A549 (cell line): ENCODE measurements at regions of chr5 and their contacts with region 1.

Region 1: GRCh38 chr5:153974131-153974812 is 64.4 kb downstream of the FAM114A2 start:
- DNase-seq: peak; percentile 35 to 56
- ATAC-seq: peak; percentile 65 to 87; a peak in 5 of 6 replicates
- H3K4me3 ChIP-seq: no peak overlapping the region
- H3K27ac ChIP-seq: no peak overlapping the region
- H3K4me1 ChIP-seq: no peaks in the 10 kb centered on the region
- CTCF ChIP-seq: peak; percentile 92
- EP300 ChIP-seq: no peak
- POLR2A ChIP-seq: no peak
- RAD21 ChIP-seq: peak; percentile 90 to 91

Region 2: GRCh38 chr5:153883854-153884611 is 90.2 kb before region 1 on chr5:
- CTCF ChIA-PET with region 1: no interaction called
- POLR2A ChIA-PET with region 1: no interaction called
- DNase-seq: no peak
- ATAC-seq: no peak
- H3K4me3 ChIP-seq: no peak overlapping the region
- H3K27ac ChIP-seq: no peak overlapping the region
- H3K4me1 ChIP-seq: no peaks in the 10 kb centered on the region
- CTCF ChIP-seq: no peak
- EP300 ChIP-seq: no peak
- POLR2A ChIP-seq: no peak
- RAD21 ChIP-seq: no peak

Region 3: DNA sequence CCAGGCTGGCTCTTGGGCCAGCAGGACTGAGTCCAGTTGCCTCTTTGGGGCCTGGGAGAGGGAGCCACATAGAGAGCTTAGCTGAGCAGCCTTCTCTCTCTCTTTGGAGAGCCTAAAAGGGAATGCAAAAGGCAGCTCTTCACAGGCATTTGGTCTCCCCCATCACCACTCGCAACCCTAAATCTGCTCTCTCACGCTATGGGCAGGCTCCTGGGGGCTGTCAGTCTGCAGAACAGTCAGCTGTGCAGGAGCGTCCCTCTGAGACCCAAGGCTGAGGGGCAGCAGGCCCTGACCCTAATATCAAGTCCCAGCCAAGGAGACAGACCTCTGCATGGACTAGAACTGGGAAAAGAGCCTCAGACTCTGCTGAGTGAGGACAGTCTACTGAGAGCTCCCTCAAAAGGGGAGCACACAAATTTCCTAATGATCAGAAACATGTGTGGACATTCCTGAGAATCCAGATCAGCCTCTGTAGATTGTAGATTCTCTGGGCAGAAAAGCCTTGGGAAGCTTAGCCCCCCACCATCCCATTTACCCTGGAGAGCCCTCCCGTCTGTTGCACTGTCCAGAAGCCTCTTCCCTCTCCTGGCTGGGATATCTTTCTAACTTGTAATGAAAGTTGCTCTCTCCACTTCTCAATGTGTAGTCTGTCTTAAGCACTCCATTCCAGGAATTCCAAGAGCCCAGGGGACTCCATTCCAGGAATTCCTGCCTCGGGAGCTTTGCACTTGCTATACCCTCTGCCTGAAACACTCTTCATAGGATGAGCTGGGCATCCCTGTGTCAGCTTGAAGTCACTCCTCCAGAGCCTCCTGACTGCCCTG is 14.9 kb before region 1 on chr5:
- CTCF ChIA-PET with region 1: interaction called, 60 read pairs
- POLR2A ChIA-PET with region 1: no interaction called
- DNase-seq: peak in 1 of 2 experiments; percentile 22
- ATAC-seq: peak; percentile 53 to 75
- H3K4me3 ChIP-seq: no peak overlapping the region
- H3K27ac ChIP-seq: no peak overlapping the region
- H3K4me1 ChIP-seq: no peaks in the 10 kb centered on the region
- CTCF ChIP-seq: no peak
- EP300 ChIP-seq: no peak
- POLR2A ChIP-seq: no peak
- RAD21 ChIP-seq: no peak

Region 4: DNA sequence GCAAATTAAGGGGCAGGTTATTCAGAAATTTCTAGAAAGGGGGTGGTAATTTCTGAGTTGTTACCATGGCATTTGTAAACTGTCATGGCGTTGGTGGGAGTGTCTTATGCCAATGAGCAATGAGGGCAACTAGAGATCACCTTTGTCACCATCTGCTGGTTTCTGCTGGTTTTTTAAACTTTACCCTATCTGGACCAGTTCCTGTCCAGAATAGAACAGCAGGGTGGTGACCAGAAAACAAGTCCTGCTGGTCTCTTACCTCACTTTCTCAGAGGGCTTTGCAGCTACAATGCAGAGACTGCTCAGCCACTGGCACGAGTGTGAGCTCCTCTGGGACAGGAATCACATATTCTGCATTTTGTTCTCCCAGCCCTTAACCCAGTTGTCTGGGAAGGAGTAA is 13.0 kb after region 1 on chr5:
- CTCF ChIA-PET with region 1: interaction called, 38 read pairs
- POLR2A ChIA-PET with region 1: no interaction called
- DNase-seq: no peak
- ATAC-seq: no peak
- H3K4me3 ChIP-seq: no peak overlapping the region
- H3K27ac ChIP-seq: no peak overlapping the region
- H3K4me1 ChIP-seq: no peaks in the 10 kb centered on the region
- CTCF ChIP-seq: no peak
- EP300 ChIP-seq: no peak
- POLR2A ChIP-seq: no peak
- RAD21 ChIP-seq: no peak

Region 5: GRCh38 chr5:154179846-154180710 is 205.8 kb after region 1 on chr5:
- CTCF ChIA-PET with region 1: interaction called, 23 read pairs
- POLR2A ChIA-PET with region 1: no interaction called
- DNase-seq: peak; percentile 69 to 80
- ATAC-seq: peak; percentile 96 to 98
- H3K4me3 ChIP-seq: no peak overlapping the region
- H3K27ac ChIP-seq: no peak overlapping the region
- H3K4me1 ChIP-seq: no peaks in the 10 kb centered on the region
- CTCF ChIP-seq: peak; percentile 76
- EP300 ChIP-seq: no peak
- POLR2A ChIP-seq: no peak
- RAD21 ChIP-seq: peak; percentile 77 to 82

Region 6: DNA sequence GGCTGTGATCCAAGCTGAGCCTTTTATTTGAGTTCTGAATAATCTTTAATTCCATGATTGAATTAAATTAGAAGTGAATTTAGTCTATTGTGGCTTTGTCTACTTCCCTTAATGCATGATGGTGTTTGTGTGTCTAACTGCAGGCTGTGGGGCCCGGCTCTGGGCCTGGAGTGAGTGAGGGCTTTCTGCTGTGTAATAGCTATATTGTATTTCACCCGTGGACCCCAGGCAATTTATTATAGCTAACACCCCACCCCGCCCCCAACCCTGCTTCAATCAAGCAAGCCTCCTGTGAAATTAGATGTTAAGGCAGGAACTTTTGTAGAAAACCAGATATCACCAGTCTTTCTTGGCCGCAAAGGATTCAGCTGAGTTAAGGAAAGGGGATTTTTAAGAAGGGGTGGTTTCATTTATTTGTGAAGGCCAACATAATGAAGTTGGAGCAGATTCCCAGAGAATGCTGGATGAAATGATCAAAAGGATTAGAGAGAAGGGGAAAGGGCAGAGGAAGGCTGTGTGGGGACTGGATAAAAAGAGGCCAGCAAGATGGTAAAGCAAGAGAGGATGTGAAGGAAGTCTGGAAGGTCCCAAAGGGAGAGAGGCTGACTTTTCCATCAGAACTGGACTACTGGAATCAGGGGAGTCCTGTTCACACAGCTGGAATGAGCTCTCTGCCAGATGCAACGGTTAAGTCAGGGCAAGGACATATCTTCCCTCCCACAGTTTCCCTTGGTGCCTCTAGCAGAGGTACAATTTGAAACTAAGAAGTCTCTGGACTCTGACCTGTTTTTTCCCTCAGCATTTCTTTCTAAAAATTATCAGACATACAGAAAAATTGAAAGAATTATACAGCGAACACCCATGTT is 346.2 kb after region 1 on chr5:
- CTCF ChIA-PET with region 1: no interaction called
- POLR2A ChIA-PET with region 1: no interaction called
- DNase-seq: no peak
- ATAC-seq: no peak
- H3K4me3 ChIP-seq: no peak overlapping the region
- H3K27ac ChIP-seq: peak overlapping the region in 1 of 2 experiments; percentile 41; a peak in 3 of 6 replicates
- H3K4me1 ChIP-seq: peaks cover 15% of the 10 kb centered on the region; the same call in 2 of the 3 replicates
- CTCF ChIP-seq: no peak
- EP300 ChIP-seq: no peak
- POLR2A ChIP-seq: no peak
- RAD21 ChIP-seq: no peak

Region 7: DNA sequence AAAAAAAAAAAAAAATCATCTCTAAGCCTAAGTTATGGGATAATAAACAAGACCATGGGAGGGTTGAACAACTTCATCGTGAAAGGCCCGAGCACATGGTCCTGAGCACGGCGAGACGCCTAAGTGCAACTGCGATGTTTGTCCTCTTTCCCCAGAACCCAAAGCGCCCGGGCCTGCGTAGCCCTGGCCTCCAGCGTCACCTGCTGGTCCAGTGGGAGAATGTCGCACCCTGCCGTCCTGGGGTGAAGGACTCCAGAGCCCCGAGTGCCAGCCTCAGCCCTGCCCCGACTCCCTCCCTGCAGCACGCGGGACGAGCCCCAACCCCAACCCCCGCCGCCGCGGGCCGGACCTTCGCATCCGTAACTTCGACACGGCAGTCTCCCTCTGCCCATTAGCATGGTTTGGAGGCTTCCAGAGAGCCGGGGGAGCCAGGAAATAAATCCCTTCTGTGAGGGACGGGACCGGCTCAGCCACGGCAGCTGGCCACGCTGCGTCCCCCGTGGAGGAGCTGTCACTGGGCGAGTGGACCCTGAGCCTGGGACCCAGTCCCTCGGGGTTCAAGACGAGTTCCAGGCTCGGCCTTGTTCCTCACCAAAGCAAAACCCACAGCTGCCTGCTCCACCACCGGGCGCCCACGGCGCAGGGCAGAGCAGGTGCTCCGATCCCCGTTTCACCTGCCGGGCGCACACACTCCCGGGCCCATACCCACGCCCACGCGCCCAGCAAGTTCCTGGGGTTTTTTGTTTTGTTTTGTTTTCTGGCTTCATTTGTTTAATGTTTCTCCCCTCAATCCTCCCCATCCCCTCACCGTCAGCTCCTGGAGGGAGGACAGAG is 636.3 kb after region 1 on chr5:
- CTCF ChIA-PET with region 1: interaction called, 15 read pairs
- POLR2A ChIA-PET with region 1: no interaction called
- DNase-seq: peak; percentile 84 to 88
- ATAC-seq: peak; percentile 93 to 98
- H3K4me3 ChIP-seq: peak overlapping the region; percentile 33
- H3K27ac ChIP-seq: peak overlapping the region in 1 of 2 experiments; percentile 69; a peak in 3 of 6 replicates
- H3K4me1 ChIP-seq: peaks cover 4% of the 10 kb centered on the region; the same call in 1 of the 3 replicates
- CTCF ChIP-seq: peak; percentile 94
- EP300 ChIP-seq: no peak
- POLR2A ChIP-seq: no peak
- RAD21 ChIP-seq: peak; percentile 99

Region 8: GRCh38 chr5:154627698-154628678 is 653.7 kb after region 1 on chr5:
- CTCF ChIA-PET with region 1: interaction called, 19 read pairs
- POLR2A ChIA-PET with region 1: no interaction called
- DNase-seq: no peak
- ATAC-seq: no peak
- H3K4me3 ChIP-seq: no peak overlapping the region
- H3K27ac ChIP-seq: no peak overlapping the region
- H3K4me1 ChIP-seq: no peaks in the 10 kb centered on the region
- CTCF ChIP-seq: no peak
- EP300 ChIP-seq: no peak
- POLR2A ChIP-seq: no peak
- RAD21 ChIP-seq: no peak